CD4-positive, alpha-beta memory T cell (primary cell): ENCODE measurements at regions of chr4 and their contacts with region 1.

Region 1: GRCh38 chr4:83503974-83504373 is 19.1 kb upstream of the ABRAXAS1 start:
- DNase-seq: peak in 4 of 5 donors; percentile 24 to 48 (median 34)
- H3K4me3 ChIP-seq: no peak overlapping the region
- H3K4me3 Mint-ChIP-seq: peak overlapping the region in 5 of 8 donors; percentile 0 to 74 (median 54)
- H3K27ac ChIP-seq: no peak overlapping the region
- H3K27ac Mint-ChIP-seq: peak overlapping the region; percentile 49 to 94 (median 87)
- H3K4me1 ChIP-seq: peaks cover 18% of the 10 kb centered on the region
- H3K4me1 Mint-ChIP-seq: peaks cover 11 to 21% (median 16%) of the 10 kb centered on the region in 4 donors
- H3K27me3 ChIP-seq: no peaks in the 10 kb centered on the region
- H3K27me3 Mint-ChIP-seq: peaks cover 1 to 2% of the 10 kb centered on the region in 2 donors

Region 2: GRCh38 chr4:83582289-83582769 is 78.4 kb after region 1 on chr4:
- CTCF ChIA-PET with region 1: interaction called, 5 read pairs
- POLR2A ChIA-PET with region 1: no interaction called
- intact Hi-C with region 1: loop called (anchors 1 kb)
- DNase-seq: no peak
- H3K4me3 ChIP-seq: no peak overlapping the region
- H3K4me3 Mint-ChIP-seq: no peak overlapping the region
- H3K27ac ChIP-seq: no peak overlapping the region
- H3K27ac Mint-ChIP-seq: no peak overlapping the region
- H3K4me1 ChIP-seq: no peaks in the 10 kb centered on the region
- H3K4me1 Mint-ChIP-seq: peaks cover 0 to 2% (median 0%) of the 10 kb centered on the region in 4 donors
- H3K27me3 ChIP-seq: no peaks in the 10 kb centered on the region
- H3K27me3 Mint-ChIP-seq: no peaks in the 10 kb centered on the region